SK-N-SH (cell line): ENCODE measurements at regions of chr3 and their contacts with region 1.

Region 1: DNA sequence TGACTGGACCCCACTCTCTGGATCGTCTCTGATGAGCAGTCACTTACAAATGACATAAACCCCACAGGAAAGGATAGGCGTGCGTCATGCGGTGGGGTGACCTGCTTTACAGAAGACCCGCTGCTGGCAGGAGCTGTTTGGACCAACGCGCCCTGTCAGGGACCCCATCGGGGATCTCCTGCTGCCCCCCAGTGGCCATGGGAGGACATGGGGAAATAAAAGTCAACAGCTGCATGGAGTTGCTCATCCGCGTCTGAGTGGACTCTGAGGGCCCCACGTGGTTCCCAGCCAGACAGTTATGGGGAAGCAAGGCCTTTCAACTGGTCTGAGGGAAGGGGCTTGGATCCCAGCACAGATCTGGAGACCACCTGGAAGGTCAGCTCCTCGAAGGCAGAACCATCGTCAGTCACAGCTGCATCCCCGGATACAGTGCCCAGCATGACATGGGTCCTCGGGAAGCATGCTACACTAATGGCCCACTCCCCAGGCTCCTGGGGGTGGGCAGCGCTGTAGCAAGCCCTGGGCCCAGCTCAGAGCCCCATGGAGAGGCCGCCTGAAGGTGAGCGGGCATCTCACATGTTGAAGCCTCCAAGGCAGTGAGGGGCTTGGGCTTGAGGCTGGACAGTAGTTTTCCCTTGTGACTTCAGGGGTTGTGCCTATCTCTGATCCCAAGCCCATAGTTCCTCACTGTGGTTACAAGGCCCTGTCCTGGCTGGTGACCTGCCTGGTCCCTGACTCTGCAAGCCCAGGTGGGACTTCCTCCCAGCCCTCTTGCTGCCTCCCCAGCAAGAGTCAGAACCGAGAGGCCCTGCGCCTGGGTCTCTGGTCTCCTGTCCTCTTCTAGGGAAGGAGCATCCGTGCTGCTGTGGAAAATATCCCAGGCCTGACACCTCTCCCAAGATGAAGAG is 32.3 kb downstream of the PTH1R start:
- DNase-seq: peak; percentile 94
- H3K4me3 ChIP-seq: peak overlapping the region in 1 of 2 experiments; percentile 30; a peak in 1 of 4 replicates
- H3K27ac ChIP-seq: no peak overlapping the region
- H3K4me1 ChIP-seq: peaks cover 11 to 19% of the 10 kb centered on the region in 2 experiments
- H3K27me3 ChIP-seq: no peaks in the 10 kb centered on the region
- CTCF ChIP-seq: peak; percentile 86
- EP300 ChIP-seq: no peak
- RAD21 ChIP-seq: peak; percentile 97

Region 2: DNA sequence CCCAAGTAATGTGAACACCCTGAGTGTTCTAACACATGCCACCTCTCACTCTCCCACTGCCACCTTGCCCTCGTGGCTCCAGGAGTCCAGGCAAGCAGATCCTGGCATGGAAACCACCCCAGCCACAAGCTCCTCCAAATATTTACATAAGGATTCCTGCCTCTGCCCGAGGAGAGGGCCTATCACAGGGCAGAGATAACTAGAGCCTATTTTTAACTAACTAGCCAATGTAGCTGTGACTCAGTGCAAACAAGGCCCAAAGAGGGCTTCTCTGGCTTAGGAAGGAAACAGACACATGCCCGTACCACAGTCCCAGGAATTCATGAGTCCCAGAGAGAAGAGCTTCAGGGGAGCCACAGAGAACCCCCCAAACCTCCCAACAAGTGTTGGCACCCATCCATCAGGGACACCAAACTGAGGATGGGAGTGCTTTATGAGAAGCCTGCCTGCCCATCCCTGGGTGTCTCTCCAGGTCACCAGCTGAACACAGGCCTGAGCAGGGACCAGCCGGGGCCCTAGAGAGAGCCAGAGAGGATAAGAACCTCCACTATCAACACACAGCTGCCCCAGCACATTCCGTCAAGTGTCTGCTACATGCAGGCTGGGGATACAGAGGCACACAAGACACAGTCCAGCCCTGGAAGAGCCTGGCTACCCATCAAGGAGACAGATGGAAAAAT is 923.3 kb before region 1 on chr3:
- CTCF ChIA-PET with region 1: no interaction called
- POLR2A ChIA-PET with region 1: no interaction called
- DNase-seq: no peak
- H3K4me3 ChIP-seq: no peak overlapping the region
- H3K27ac ChIP-seq: peak overlapping the region in 1 of 2 experiments; percentile 89; a peak in 3 of 4 replicates
- H3K4me1 ChIP-seq: peaks cover 41 to 51% of the 10 kb centered on the region in 2 experiments; a peak in 3 of 4 replicates
- H3K27me3 ChIP-seq: no peaks in the 10 kb centered on the region
- CTCF ChIP-seq: no peak
- EP300 ChIP-seq: no peak
- RAD21 ChIP-seq: no peak

Region 3: GRCh38 chr3:46845791-46846623 is 63.8 kb before region 1 on chr3:
- CTCF ChIA-PET with region 1: interaction called, 70 read pairs
- POLR2A ChIA-PET with region 1: interaction called, 10 read pairs
- DNase-seq: peak; percentile 98
- H3K4me3 ChIP-seq: peak overlapping the region; percentile 46 to 49; a peak in 3 of 4 replicates
- H3K27ac ChIP-seq: peak overlapping the region; percentile 38 to 98
- H3K4me1 ChIP-seq: peaks cover 0 to 27% of the 10 kb centered on the region in 2 experiments; a peak in 2 of 4 replicates
- H3K27me3 ChIP-seq: no peaks in the 10 kb centered on the region
- CTCF ChIP-seq: peak; percentile 53
- EP300 ChIP-seq: peak in 1 of 2 experiments; percentile 21; a peak in 1 of 4 replicates
- RAD21 ChIP-seq: peak; percentile 64

Region 4: DNA sequence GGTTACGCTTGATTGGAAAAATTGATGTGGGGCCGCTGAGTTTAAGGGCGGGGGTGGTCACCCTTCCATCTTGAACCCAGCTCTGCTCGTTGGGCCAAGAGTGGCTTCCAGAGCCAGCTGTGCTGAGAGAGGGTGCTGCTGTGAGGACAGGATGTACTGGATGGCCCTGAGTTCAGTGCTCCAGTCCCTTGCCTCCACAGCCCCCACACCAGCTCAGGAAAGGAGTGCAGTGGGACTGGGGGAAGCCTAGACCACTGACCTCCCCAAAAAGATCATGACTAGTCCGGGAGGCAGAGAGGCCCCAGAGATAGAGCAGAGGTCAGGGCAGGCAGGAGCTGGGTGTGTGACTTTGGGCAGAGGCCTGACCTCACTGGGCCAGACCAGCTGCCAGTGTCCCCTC is 36.3 kb before region 1 on chr3:
- CTCF ChIA-PET with region 1: interaction called, 480 read pairs
- POLR2A ChIA-PET with region 1: no interaction called
- DNase-seq: no peak
- H3K4me3 ChIP-seq: no peak overlapping the region
- H3K27ac ChIP-seq: no peak overlapping the region
- H3K4me1 ChIP-seq: peaks cover 0 to 12% of the 10 kb centered on the region in 2 experiments; a peak in 1 of 4 replicates
- H3K27me3 ChIP-seq: no peaks in the 10 kb centered on the region
- CTCF ChIP-seq: no peak
- EP300 ChIP-seq: no peak
- RAD21 ChIP-seq: no peak

Region 5: DNA sequence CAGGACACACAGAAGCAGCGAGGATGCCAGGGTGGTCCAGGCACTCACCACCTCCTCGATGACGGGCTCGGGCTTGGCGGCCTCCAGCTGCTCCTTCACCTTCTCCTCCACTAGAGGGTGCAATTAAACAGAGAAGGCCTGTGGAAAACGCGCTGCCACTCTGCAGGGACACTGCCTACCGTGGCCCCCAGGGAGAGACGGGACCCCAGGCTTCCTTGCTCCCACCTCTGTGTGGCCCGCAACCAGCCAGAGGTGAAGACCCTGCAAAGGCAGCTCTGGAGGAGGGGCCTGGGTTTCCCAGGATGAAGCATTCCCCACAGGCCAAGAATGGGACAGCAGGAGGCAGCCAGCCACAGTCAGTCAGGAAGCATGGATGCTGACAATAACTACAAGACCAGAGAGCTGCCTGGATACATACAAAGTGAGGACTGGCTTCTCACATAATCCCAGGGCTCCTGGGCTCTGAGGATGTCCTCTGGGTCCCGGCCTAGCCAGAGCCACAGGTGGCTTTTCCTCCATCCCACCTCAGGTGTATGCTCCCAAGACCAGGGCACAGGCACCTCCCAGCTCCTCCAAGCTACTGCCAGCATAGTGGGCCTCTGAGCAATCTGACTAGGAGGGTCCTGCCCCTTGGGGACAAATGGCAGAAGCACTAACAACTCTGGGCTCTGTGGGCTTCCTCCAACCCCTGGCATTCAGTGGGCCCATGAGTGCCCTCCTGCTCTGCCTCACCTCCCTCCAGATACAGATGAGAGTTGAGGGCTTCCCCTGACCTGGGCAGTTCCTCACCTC is 14.0 kb after region 1 on chr3:
- CTCF ChIA-PET with region 1: interaction called, 29 read pairs
- POLR2A ChIA-PET with region 1: no interaction called
- DNase-seq: peak; percentile 79
- H3K4me3 ChIP-seq: peak overlapping the region in 1 of 2 experiments; percentile 35; a peak in 1 of 4 replicates
- H3K27ac ChIP-seq: no peak overlapping the region
- H3K4me1 ChIP-seq: no peaks in the 10 kb centered on the region
- H3K27me3 ChIP-seq: no peaks in the 10 kb centered on the region
- CTCF ChIP-seq: peak; percentile 81
- EP300 ChIP-seq: no peak
- RAD21 ChIP-seq: peak; percentile 81

Region 6: GRCh38 chr3:47005212-47006144 is 95.7 kb after region 1 on chr3:
- CTCF ChIA-PET with region 1: interaction called, 10 read pairs
- POLR2A ChIA-PET with region 1: no interaction called
- DNase-seq: peak; percentile 26
- H3K4me3 ChIP-seq: no peak overlapping the region
- H3K27ac ChIP-seq: no peak overlapping the region
- H3K4me1 ChIP-seq: peaks cover 0 to 15% of the 10 kb centered on the region in 2 experiments; a peak in 1 of 4 replicates
- H3K27me3 ChIP-seq: no peaks in the 10 kb centered on the region
- CTCF ChIP-seq: no peak
- EP300 ChIP-seq: no peak
- RAD21 ChIP-seq: no peak